Mammary epithelial cell (primary cell): ENCODE measurements at regions of chr2 and their contacts with region 1.

Region 1: GRCh38 chr2:157312866-157313486 is 12.6 kb downstream of the ERMN start:
- DNase-seq: no peak
- H3K4me3 ChIP-seq: no peak overlapping the region
- H3K27ac ChIP-seq: no peak overlapping the region
- H3K4me1 ChIP-seq: no peaks in the 10 kb centered on the region
- H3K27me3 ChIP-seq: no peaks in the 10 kb centered on the region
- CTCF ChIP-seq: no peak

Region 2: GRCh38 chr2:157363612-157364101 is 50.7 kb after region 1 on chr2:
- CTCF ChIA-PET with region 1: no interaction called
- dilution Hi-C with region 1: no loop called
- in situ Hi-C with region 1: no loop called
- intact Hi-C with region 1: no loop called
- DNase-seq: peak; percentile 12
- H3K4me3 ChIP-seq: no peak overlapping the region
- H3K27ac ChIP-seq: no peak overlapping the region
- H3K4me1 ChIP-seq: no peaks in the 10 kb centered on the region
- H3K27me3 ChIP-seq: no peaks in the 10 kb centered on the region
- CTCF ChIP-seq: no peak

Region 3: GRCh38 chr2:158822193-158822592 is 1509.2 kb after region 1 on chr2:
- CTCF ChIA-PET with region 1: no interaction called
- dilution Hi-C with region 1: no loop called
- in situ Hi-C with region 1: no loop called
- intact Hi-C with region 1: loop called (anchors 5 kb)
- DNase-seq: no peak
- H3K4me3 ChIP-seq: no peak overlapping the region
- H3K27ac ChIP-seq: no peak overlapping the region
- H3K4me1 ChIP-seq: peaks cover 6% of the 10 kb centered on the region
- H3K27me3 ChIP-seq: no peaks in the 10 kb centered on the region
- CTCF ChIP-seq: no peak